Mucosa of descending colon (tissue), 3 donors: ENCODE measurements at regions of chr1 and their contacts with region 1.

Region 1: DNA sequence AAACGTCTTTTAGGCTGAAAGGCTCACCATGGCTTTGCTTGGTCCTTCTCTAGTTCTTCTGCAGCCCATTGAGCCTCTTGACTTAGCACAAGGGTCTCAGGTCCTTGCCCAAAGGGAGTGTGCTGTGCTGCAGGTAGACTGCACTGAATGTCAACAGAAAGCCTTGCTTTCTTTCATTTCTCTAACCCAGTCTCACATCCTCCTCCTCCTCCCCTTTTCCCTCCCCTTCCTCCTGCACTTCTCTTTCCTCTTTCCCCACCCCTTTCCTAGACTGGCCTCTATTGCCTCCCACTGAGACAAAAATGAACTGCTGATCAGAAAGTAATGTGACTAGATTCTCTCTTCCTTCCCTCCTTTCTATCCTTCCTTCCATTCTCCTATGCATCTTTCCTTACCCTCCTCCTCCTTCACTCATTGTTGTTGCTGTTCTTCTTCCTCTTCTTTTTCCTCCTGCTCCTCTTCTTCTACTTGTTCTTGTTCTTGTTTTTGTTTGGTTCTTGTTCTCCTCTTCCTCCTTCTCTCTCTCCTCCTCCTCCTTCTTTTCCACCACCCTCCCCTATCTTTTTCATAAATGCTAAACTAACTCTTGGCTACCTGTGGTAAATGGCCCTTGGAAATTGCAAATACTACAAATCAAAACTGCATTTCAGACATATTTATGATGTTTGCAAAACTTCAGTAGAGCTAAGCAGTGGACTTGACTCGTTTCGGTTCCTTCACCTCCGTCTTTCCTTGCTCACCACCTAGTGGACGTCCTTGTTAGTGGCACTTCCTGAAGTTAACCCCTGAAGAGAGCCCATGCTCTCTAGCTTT is at the start of gene SELL:
- DNase-seq: peak in 2 of 3 donors; percentile 32 to 82
- ATAC-seq: peak; percentile 98
- H3K4me3 ChIP-seq: no peak within 1 kb of the TSS
- H3K4me1 ChIP-seq: no peaks in the 10 kb centered on the region
- CTCF ChIP-seq: peak; percentile 54
- total RNA-seq, gene SELL: 0.78 to 2.5 (median 0.92) TPM

Region 2: DNA sequence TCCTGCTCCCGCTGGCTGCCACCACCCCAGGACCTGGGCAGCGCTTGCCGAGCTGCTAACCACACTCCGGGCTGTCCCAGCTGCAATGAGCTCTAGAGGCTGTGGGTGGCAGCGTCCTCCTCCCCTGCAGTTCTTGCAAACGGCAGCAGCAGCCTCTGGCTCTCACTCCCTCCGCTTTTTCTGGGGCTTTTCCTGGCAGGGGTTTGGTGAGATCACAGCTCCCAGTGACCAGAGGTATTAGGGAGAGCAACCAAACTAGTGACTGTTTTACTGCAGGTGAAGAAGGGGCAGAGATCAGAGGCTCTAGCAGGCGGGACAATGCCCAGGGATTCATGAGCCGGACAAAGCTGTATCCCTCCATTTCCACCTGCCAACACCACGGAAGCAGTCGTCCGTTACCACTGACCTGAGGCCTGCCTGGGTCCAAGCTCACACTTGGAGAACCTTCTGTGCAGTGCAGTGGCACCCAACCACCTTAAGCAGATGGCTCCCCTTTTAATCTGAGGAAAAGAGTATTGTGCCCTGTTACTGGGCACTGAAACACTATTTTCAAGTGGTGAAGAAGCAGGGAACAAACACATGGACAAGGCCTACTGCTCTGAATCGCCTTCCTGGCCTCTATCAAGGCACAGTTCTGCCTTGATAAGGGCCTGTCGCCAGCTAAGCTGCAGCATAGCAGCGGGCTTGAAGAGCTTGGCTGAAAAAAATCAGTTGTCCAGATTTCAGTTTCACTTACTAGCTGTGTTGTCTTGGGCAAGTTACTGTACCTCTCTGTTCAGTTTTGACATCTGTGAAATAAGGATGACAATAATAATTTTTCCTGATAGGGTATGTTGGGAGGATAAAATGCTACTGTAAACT is 125.0 kb before region 1 on chr1 and contains the start of gene F5:
- intact Hi-C with region 1: loop called in 1 of 2 experiments (anchors 5 kb)
- DNase-seq: peak; percentile 73 to 87 (median 81)
- ATAC-seq: peak; percentile 100
- H3K4me3 ChIP-seq: no peak within 1 kb of the TSS
- H3K4me1 ChIP-seq: no peaks in the 10 kb centered on the region
- CTCF ChIP-seq: peak; percentile 36
- total RNA-seq, gene F5: 0.44 to 2.5 (median 0.69) TPM